ENCODE measurements at regions of chr10 and their contacts with region 1.

Region 1: GRCh38 chr10:69885379-69886013 is 83.8 kb downstream of the COL13A1 start:
- DNase-seq: no peak
- H3K4me3 ChIP-seq: no peak overlapping the region
- H3K27ac ChIP-seq: no peak overlapping the region
- H3K4me1 ChIP-seq: peaks cover 0 to 10% (median 7%) of the 10 kb centered on the region in 4 experiments; a peak in 6 of 7 replicates
- H3K27me3 ChIP-seq: no peaks in the 10 kb centered on the region
- CTCF ChIP-seq: peak in 2 of 3 experiments; percentile 38 to 50; a peak in 2 of 4 replicates
- EP300 ChIP-seq: no peak
- POLR2A ChIP-seq: no peak
- RAD21 ChIP-seq: no peak; a peak in 1 of 4 replicates

Region 2: DNA sequence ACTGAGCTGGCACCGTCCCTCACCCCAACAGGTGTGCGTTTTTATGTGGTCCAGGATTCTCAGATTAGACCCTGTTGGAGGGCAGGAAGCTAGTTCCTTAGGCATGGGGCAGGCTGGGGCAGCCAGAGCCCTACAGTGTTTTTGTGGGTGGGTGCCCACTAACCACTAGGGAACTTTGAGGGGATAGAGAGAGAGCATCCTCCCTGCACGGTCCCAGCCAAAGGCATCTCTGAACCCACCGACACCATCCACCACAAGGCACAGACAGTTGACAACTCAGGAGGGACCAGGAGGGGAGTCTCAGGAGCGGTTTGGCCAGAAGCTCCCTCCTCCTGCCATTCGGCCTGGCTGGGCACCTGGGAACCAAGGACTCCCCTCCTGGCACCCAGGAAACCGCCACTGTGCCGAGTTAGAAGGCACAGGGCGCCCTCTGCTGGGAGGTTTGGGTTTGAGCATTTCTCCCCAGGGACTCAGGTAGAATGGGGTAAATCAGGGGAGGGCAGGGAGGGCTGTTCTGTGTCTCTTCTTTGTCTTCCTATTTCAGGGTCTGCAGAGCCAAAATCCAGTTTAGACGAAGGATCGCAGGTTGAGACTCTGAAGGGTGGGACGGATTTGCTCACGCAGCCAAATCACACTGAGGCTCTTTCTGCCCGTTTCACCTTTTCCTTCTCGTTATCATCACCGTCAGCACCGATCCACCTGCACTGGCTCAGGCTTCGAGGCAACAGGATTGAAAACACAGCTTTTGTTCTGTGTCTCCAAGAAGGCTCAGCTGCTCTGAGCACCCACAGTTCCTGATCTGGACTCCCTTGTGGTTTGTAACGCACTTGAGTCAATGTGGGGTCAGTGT is 168.6 kb before region 1 on chr10:
- CTCF ChIA-PET with region 1: no interaction called
- POLR2A ChIA-PET with region 1: no interaction called
- DNase-seq: peak; percentile 46 to 93
- H3K4me3 ChIP-seq: no peak overlapping the region
- H3K27ac ChIP-seq: no peak overlapping the region
- H3K4me1 ChIP-seq: peaks cover 0 to 2% (median under 1%) of the 10 kb centered on the region in 4 experiments; a peak in 3 of 7 replicates
- H3K27me3 ChIP-seq: no peaks in the 10 kb centered on the region
- CTCF ChIP-seq: peak; percentile 81 to 98 (median 89)
- EP300 ChIP-seq: no peak
- POLR2A ChIP-seq: no peak
- RAD21 ChIP-seq: peak; percentile 96 to 99

Region 3: GRCh38 chr10:69813632-69814031 is 71.9 kb before region 1 on chr10:
- CTCF ChIA-PET with region 1: interaction called, 12 read pairs
- POLR2A ChIA-PET with region 1: no interaction called
- DNase-seq: no peak
- H3K4me3 ChIP-seq: no peak overlapping the region
- H3K27ac ChIP-seq: no peak overlapping the region
- H3K4me1 ChIP-seq: peaks cover 0 to 10% (median 4%) of the 10 kb centered on the region in 4 experiments; a peak in 3 of 7 replicates
- H3K27me3 ChIP-seq: no peaks in the 10 kb centered on the region
- CTCF ChIP-seq: peak in 2 of 3 experiments; percentile 19 to 20; a peak in 2 of 4 replicates
- EP300 ChIP-seq: no peak
- POLR2A ChIP-seq: no peak
- RAD21 ChIP-seq: no peak; a peak in 1 of 4 replicates

Region 4: GRCh38 chr10:69839696-69840345 is 45.7 kb before region 1 on chr10:
- CTCF ChIA-PET with region 1: interaction called, 15 read pairs
- POLR2A ChIA-PET with region 1: no interaction called
- DNase-seq: no peak
- H3K4me3 ChIP-seq: no peak overlapping the region
- H3K27ac ChIP-seq: no peak overlapping the region
- H3K4me1 ChIP-seq: peaks cover 8 to 31% (median 21%) of the 10 kb centered on the region in 4 experiments
- H3K27me3 ChIP-seq: peaks cover 0 to 2% (median 0%) of the 10 kb centered on the region in 4 experiments; a peak in 1 of 7 replicates
- CTCF ChIP-seq: no peak
- EP300 ChIP-seq: no peak
- POLR2A ChIP-seq: no peak
- RAD21 ChIP-seq: no peak

Region 5: GRCh38 chr10:69901628-69902505 is 16.4 kb after region 1 on chr10:
- CTCF ChIA-PET with region 1: interaction called, 100 read pairs
- POLR2A ChIA-PET with region 1: interaction called, 4 read pairs
- DNase-seq: peak; percentile 31 to 71
- H3K4me3 ChIP-seq: no peak overlapping the region
- H3K27ac ChIP-seq: no peak overlapping the region
- H3K4me1 ChIP-seq: peaks cover 0 to 15% (median 7%) of the 10 kb centered on the region in 4 experiments; a peak in 3 of 7 replicates
- H3K27me3 ChIP-seq: no peaks in the 10 kb centered on the region
- CTCF ChIP-seq: peak; percentile 72 to 96 (median 89)
- EP300 ChIP-seq: no peak
- POLR2A ChIP-seq: no peak
- RAD21 ChIP-seq: peak; percentile 52 to 73

Measured in H1 (cell line).